ENCODE measurements at regions of chr9 and their contacts with region 1.

Region 1: DNA sequence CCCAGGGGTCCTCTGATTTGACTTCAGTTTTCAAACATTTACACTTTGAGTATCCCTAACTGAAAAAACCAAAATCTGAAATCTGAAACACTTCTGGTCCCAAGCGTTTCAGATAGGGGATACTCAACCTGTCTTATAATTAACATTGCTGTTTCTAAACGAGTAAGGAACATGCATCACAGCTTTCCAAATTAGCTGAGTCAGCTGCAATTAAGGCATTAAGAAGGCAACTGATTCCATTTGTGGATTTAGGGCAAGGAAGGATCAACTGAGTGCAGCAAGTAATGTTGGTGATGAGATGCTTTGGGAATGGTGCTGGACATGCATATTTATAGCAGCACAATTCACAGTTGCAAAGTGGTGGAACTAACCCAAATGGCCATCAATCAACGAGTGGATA is 168.6 kb downstream of the ACER2 start:
- DNase-seq: no peak
- ATAC-seq: no peak
- H3K4me3 ChIP-seq: no peak overlapping the region
- H3K27ac ChIP-seq: no peak overlapping the region
- H3K4me1 ChIP-seq: no peaks in the 10 kb centered on the region
- H3K27me3 ChIP-seq: peaks cover 2% of the 10 kb centered on the region

Region 2: GRCh38 chr9:19631181-19631580 is 53.8 kb after region 1 on chr9:
- intact Hi-C with region 1: loop called in 1 of 4 experiments (anchors 10 kb)
- DNase-seq: no peak
- ATAC-seq: no peak
- H3K4me3 ChIP-seq: no peak overlapping the region
- H3K27ac ChIP-seq: no peak overlapping the region
- H3K4me1 ChIP-seq: no peaks in the 10 kb centered on the region
- H3K27me3 ChIP-seq: no peaks in the 10 kb centered on the region

Measured in right cardiac atrium (tissue), 5 donors.